Head of caudate nucleus (tissue), 42 donors: ENCODE measurements at regions of chr17 and their contacts with region 1.

Region 1: DNA sequence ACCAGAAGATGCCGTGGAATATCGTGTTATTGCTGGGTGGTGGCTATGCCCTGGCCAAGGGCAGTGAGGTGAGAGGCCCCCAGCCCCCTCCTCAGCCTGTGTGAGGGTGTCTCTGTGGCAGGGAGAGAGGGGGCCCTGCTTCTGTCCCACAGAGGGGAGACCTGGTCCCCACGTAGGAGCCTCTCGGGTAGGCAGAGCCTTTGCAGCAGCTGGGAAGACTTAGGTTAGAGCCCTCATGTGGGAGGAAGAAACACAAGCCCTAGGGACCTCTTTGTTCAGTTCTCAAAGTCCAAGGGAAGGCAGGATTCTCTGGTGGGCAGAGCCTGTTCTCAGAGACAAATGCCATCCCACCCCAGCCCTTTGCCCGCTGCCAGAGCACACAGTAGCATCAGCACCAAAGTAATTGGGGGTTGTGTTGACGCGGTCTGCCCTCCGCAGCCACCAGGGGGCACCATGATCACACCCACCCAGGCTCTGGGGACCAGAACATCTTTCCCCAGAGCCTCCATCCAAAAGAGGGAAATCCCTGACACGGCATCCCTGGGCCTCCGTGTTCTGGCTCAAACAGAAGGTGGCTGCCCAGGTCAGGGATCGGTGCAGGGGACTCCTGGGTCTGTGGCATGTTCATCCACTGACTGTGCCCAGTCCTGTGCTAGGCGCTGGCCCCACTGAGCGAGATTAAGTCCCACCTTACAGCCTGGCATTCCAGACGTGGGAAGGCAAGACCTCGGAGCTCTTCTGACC is 11.5 kb upstream of the FOXN1 start:
- DNase-seq: peak; percentile 72 to 92 (median 84)

Region 2: DNA sequence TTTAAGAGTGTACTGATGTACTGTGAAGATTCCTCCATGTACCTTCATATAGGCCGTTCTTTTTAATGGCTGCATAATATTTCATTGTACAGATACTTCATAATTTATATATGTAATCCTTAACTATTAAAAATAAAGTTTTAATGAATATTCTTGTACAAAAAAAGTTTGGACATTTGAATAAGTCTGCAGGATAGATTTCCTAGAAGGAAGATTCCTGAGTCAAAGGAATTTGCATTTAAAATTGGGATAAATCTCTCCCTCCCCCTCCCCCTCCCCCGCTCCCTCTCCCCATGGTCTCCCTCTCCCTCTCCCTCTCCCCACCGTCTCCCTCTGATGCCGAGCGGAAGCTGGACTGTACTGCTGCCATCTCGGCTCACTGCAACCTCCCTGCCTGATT is 36.7 kb before region 1 on chr17:
- intact Hi-C with region 1: no loop called
- DNase-seq: no peak

Region 3: GRCh38 chr17:28536532-28537238 is 42.1 kb after region 1 on chr17:
- intact Hi-C with region 1: loop called (anchors 5 kb)
- DNase-seq: no peak

Region 4: GRCh38 chr17:28612936-28613872 is 118.6 kb after region 1 on chr17:
- intact Hi-C with region 1: loop called (anchors 10 kb)
- DNase-seq: peak in 34 of 42 donors; percentile 13 to 80 (median 48)